Panc1 (cell line): ENCODE measurements at regions of chr1 and their contacts with region 1.

Region 1: GRCh38 chr1:22952694-22953391 is 19.8 kb downstream of the LACTBL1 start:
- DNase-seq: no peak
- ATAC-seq: no peak
- H3K4me3 ChIP-seq: no peak overlapping the region
- H3K27ac ChIP-seq: no peak overlapping the region
- H3K4me1 ChIP-seq: no peaks in the 10 kb centered on the region
- H3K27me3 ChIP-seq: no peaks in the 10 kb centered on the region
- CTCF ChIP-seq: no peak

Region 2: DNA sequence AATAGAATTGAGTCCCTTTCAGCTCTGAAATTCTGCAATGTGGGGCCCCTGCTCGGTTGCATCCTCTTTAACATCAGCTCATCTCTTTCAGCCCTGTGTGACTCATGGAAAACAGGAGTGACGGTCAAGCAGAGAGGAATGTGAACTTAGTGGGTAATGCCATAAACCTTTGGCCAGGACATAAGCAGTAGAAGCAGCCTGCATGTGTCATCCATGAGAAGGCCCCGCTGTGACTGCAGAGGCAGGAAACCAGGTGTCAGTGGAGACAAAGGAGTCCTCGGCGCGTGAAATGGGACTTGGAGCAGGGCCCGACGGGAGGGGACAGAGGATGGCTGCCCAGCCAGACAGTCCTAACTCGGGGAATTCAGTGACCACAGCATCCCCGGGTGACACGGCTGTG is 263.3 kb before region 1 on chr1:
- CTCF ChIA-PET with region 1: no interaction called
- POLR2A ChIA-PET with region 1: no interaction called
- in situ Hi-C with region 1: no loop called
- intact Hi-C with region 1: no loop called
- DNase-seq: peak; percentile 94
- ATAC-seq: peak; percentile 92
- H3K4me3 ChIP-seq: no peak overlapping the region
- H3K27ac ChIP-seq: no peak overlapping the region
- H3K4me1 ChIP-seq: no peaks in the 10 kb centered on the region
- H3K27me3 ChIP-seq: no peaks in the 10 kb centered on the region
- CTCF ChIP-seq: no peak

Region 3: GRCh38 chr1:22739648-22740385 is 213.0 kb before region 1 on chr1:
- CTCF ChIA-PET with region 1: interaction called, 10 read pairs
- POLR2A ChIA-PET with region 1: no interaction called
- in situ Hi-C with region 1: no loop called
- intact Hi-C with region 1: no loop called
- DNase-seq: peak; percentile 80
- ATAC-seq: peak; percentile 91
- H3K4me3 ChIP-seq: peak overlapping the region in 1 of 2 experiments; percentile 25; a peak in 2 of 4 replicates
- H3K27ac ChIP-seq: peak overlapping the region; percentile 83
- H3K4me1 ChIP-seq: peaks cover 33% of the 10 kb centered on the region
- H3K27me3 ChIP-seq: no peaks in the 10 kb centered on the region
- CTCF ChIP-seq: no peak